Panc1 (cell line): ENCODE measurements at regions of chr4 and their contacts with region 1.

Region 1: DNA sequence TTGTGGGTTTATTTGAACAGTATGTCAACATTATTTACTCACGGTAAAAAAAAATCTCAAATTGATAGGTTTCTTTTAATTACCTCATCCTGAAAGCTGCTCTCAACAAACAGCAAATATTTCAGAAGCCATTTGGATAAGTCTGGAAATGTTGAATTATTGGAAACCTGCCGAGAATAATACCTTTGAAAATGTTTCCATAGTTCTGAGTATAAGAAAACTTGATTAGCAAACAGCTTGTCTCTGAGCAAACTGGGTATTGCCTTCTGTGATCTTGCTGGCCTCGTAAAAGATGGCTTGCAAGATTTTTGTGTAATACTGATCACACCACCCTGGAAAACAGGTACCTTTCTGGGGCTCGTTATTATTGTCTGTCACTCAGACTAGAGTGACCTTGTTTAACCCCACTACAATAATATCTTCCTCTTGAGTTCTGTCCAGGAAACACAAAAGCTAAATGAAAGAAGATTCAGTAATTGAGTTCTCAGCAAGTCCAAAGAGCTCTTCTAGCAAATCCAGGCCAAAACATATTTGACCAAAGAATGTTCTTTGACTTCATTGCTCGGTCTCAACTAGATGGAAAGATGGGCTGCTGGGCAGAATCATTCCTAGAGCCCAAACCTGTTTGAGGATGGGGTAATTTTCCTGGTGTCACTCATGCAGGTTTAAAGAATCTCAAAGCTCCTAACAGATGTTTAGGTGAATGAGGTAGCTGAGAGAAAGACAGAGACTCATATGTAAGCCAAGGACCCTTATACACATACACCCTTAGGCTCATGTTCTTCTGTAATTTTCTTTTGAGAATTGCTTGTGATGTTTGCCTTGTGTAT is 255.6 kb upstream of the JADE1 start:
- DNase-seq: no peak
- ATAC-seq: no peak
- H3K4me3 ChIP-seq: peak overlapping the region; percentile 51 to 76
- H3K27ac ChIP-seq: peak overlapping the region; percentile 62
- H3K4me1 ChIP-seq: peaks cover 8% of the 10 kb centered on the region
- H3K27me3 ChIP-seq: no peaks in the 10 kb centered on the region
- CTCF ChIP-seq: no peak

Region 2: GRCh38 chr4:128006592-128006991 is 547.3 kb before region 1 on chr4:
- CTCF ChIA-PET with region 1: no interaction called
- POLR2A ChIA-PET with region 1: no interaction called
- in situ Hi-C with region 1: no loop called
- intact Hi-C with region 1: no loop called
- DNase-seq: no peak
- ATAC-seq: no peak
- H3K4me3 ChIP-seq: no peak overlapping the region
- H3K27ac ChIP-seq: no peak overlapping the region
- H3K4me1 ChIP-seq: no peaks in the 10 kb centered on the region
- H3K27me3 ChIP-seq: no peaks in the 10 kb centered on the region
- CTCF ChIP-seq: no peak

Region 3: DNA sequence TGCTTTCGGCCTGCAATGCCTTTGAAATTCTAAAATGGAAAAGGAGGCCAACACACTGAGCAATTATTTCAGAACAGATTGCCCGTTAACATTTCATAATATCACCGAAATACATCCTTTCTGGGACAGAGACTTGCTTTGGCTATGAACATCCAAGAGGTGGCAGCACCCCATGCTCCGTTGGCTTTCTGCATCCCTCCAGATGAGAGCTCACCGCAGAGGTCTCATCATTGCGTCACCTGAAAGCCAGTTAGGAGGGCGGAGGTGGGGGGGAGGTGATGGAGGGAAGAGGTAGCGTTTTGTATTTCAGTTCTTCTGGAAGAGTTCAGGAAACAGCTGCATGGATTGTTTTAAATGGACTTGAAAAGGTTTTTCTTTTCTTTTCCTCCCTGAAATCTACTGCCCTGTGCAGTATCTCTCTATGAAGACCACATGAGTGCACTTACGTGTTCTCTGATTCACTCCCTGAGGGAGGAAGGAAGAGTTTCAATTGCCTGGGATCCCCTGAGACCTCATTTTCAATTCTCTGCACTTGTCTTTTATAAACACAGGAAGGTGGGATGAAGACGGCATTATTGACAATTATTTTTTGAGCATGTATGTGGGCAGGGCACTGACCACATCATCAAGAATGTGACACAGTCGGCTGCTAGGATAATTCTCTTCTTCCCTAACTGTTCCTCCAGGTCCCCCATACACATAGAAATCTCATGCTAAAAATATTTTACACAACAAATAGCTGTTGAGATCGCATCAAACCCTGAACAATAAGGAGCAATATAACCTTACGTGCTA is 99.4 kb before region 1 on chr4:
- CTCF ChIA-PET with region 1: interaction called, 4 read pairs
- POLR2A ChIA-PET with region 1: no interaction called
- in situ Hi-C with region 1: no loop called
- intact Hi-C with region 1: loop called (anchors 5 kb)
- DNase-seq: peak; percentile 63
- ATAC-seq: peak; percentile 93
- H3K4me3 ChIP-seq: no peak overlapping the region
- H3K27ac ChIP-seq: peak overlapping the region; percentile 46; the same call in 1 of the 2 replicates
- H3K4me1 ChIP-seq: no peaks in the 10 kb centered on the region
- H3K27me3 ChIP-seq: no peaks in the 10 kb centered on the region
- CTCF ChIP-seq: peak; percentile 82

Region 4: GRCh38 chr4:128707864-128708263 is 154.0 kb after region 1 on chr4:
- CTCF ChIA-PET with region 1: no interaction called
- POLR2A ChIA-PET with region 1: no interaction called
- in situ Hi-C with region 1: no loop called
- intact Hi-C with region 1: no loop called
- DNase-seq: no peak
- ATAC-seq: no peak
- H3K4me3 ChIP-seq: no peak overlapping the region
- H3K27ac ChIP-seq: no peak overlapping the region
- H3K4me1 ChIP-seq: no peaks in the 10 kb centered on the region
- H3K27me3 ChIP-seq: no peaks in the 10 kb centered on the region
- CTCF ChIP-seq: no peak